Posterior vena cava (tissue), 2 donors: ENCODE measurements at regions of chr3 and their contacts with region 1.

Region 1: GRCh38 chr3:130759699-130760338 is 13.2 kb upstream of the PIK3R4 start:
- DNase-seq: no peak

Region 2: GRCh38 chr3:130480736-130481135 is 279.1 kb before region 1 on chr3:
- intact Hi-C with region 1: no loop called
- DNase-seq: no peak

Region 3: GRCh38 chr3:130839813-130840212 is 80.0 kb after region 1 on chr3:
- intact Hi-C with region 1: no loop called
- DNase-seq: no peak

Region 4: DNA sequence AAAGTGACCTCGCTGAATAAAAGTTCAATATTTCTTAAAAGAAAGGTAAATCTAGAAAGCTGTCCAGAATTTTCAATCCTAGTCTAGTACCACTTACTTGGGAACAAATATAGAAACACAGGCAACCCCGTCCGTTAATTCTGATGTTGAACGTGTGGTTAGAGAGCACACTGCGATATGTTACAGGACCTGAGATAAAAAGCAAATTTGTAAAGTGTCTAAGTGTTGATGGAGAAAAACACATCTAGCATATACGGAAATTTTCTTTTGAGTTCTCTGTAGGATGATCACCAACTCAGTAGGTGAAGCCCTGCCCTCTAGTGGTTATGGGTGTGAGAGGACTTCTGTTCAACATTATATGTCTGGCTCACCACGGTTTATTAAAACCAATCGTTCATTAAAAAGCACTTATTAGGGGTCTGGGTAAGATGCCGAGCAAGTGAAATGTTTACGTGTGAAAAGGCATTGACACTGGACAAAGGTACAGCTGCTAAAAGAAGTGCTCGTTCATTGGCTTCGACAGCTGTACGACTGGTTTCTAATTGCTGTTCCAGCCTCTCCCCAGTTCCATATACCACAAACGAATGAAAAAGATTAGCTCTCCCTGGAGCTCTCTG is 133.0 kb after region 1 on chr3:
- intact Hi-C with region 1: loop called (anchors 10 kb)
- DNase-seq: no peak

Region 5: DNA sequence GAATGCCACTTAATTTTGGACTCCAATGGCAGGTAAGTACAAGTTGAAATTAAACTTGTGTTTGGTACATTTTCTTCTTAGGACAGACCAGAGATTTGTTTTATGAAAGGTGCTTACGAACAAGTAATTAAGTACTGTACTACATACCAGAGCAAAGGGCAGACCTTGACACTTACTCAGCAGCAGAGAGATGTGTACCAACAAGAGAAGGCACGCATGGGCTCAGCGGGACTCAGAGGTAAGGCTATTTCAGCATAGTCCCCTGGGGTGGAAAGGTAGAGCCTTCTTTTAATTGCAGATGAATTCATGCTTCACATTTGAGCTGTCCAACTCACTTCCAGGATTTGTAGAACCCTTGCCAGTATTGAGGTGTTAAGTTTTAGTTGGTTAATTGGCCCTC is 215.4 kb after region 1 on chr3:
- intact Hi-C with region 1: no loop called
- DNase-seq: no peak

Region 6: DNA sequence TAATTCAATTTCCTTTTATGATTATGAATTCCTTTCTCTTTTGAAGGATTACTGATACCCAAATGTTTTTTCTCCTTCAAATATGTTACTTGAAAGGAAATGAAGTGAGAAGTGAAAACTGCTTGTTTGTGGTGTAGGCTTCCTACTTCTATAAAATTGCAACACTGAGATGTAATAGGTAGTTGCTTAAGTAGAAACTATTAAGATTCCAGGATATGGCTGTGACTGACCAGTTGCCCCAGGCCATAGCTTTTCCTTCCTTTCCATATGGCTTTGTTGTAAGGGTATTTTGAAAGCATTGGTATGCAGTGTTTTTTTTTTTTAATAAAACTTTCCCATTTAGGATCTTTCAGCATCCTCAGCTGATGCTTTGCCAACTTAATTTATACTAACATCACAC is 1686.0 kb after region 1 on chr3:
- intact Hi-C with region 1: loop called in 1 of 2 experiments (anchors 10 kb)
- DNase-seq: no peak